Activated B cell treated with CpG ODN at 0.5 μM for 24 hours (primary cell): ENCODE measurements at regions of chr6 and their contacts with region 1.

Region 1: GRCh38 chr6:160791459-160791858 is 89.4 kb downstream of the PLG start:
- DNase-seq: no peak
- ATAC-seq: peak; percentile 74
- H3K4me3 Mint-ChIP-seq: no peak overlapping the region
- H3K27ac Mint-ChIP-seq: peak overlapping the region; percentile 73
- H3K4me1 Mint-ChIP-seq: peaks cover 17% of the 10 kb centered on the region
- H3K27me3 Mint-ChIP-seq: no peaks in the 10 kb centered on the region
- CTCF ChIP-seq: no peak

Region 2: DNA sequence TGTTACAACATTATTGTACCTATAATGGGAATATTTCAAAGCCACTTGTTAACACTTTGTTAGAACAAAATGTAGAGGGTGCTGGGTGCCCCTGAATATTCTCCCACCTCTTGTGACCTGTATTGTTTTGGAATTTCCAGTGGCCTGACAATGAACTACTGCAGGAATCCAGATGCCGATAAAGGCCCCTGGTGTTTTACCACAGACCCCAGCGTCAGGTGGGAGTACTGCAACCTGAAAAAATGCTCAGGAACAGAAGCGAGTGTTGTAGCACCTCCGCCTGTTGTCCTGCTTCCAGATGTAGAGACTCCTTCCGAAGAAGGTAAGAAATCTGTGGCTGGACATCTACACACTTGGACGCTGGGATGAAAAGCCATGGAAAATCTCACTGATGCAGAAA is 60.5 kb before region 1 on chr6:
- CTCF ChIA-PET with region 1: no interaction called
- POLR2A ChIA-PET with region 1: no interaction called
- intact Hi-C with region 1: no loop called
- DNase-seq: no peak
- ATAC-seq: no peak
- H3K4me3 Mint-ChIP-seq: no peak overlapping the region
- H3K27ac Mint-ChIP-seq: no peak overlapping the region
- H3K4me1 Mint-ChIP-seq: no peaks in the 10 kb centered on the region
- H3K27me3 Mint-ChIP-seq: peaks cover 23% of the 10 kb centered on the region
- CTCF ChIP-seq: no peak

Region 3: GRCh38 chr6:160742090-160742489 is 49.4 kb before region 1 on chr6:
- CTCF ChIA-PET with region 1: no interaction called
- POLR2A ChIA-PET with region 1: interaction called, 3 read pairs
- intact Hi-C with region 1: loop called (anchors 1 kb)
- DNase-seq: no peak
- ATAC-seq: peak; percentile 36
- H3K4me3 Mint-ChIP-seq: no peak overlapping the region
- H3K27ac Mint-ChIP-seq: no peak overlapping the region
- H3K4me1 Mint-ChIP-seq: peaks cover 35% of the 10 kb centered on the region
- H3K27me3 Mint-ChIP-seq: peaks cover 10% of the 10 kb centered on the region
- CTCF ChIP-seq: no peak

Region 4: GRCh38 chr6:160837146-160837545 is 45.7 kb after region 1 on chr6:
- CTCF ChIA-PET with region 1: no interaction called
- POLR2A ChIA-PET with region 1: no interaction called
- intact Hi-C with region 1: no loop called
- DNase-seq: no peak
- ATAC-seq: no peak
- H3K4me3 Mint-ChIP-seq: no peak overlapping the region
- H3K27ac Mint-ChIP-seq: no peak overlapping the region
- H3K4me1 Mint-ChIP-seq: no peaks in the 10 kb centered on the region
- H3K27me3 Mint-ChIP-seq: no peaks in the 10 kb centered on the region
- CTCF ChIP-seq: no peak

Region 5: DNA sequence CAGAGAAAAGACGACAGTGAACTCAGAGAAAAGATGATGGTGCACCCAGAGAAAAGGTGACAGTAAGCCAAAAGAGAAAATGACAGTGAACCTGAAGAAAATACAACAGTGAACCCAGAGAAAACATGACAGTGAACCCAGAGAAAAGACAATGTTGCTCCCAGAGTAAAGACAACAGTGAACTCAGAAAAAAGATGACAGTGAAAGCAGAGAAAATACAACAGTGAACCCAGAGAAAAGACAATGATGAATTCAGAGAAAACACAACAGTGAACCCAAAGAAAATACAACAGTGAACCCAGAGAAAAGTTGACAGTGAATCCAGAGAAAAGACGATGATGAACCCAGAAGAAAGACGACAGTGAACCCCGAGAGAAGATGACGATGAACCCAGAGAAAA is 59.6 kb after region 1 on chr6:
- CTCF ChIA-PET with region 1: no interaction called
- POLR2A ChIA-PET with region 1: no interaction called
- intact Hi-C with region 1: no loop called
- DNase-seq: no peak
- ATAC-seq: no peak
- H3K4me3 Mint-ChIP-seq: no peak overlapping the region
- H3K27ac Mint-ChIP-seq: no peak overlapping the region
- H3K4me1 Mint-ChIP-seq: no peaks in the 10 kb centered on the region
- H3K27me3 Mint-ChIP-seq: no peaks in the 10 kb centered on the region
- CTCF ChIP-seq: no peak

Region 6: GRCh38 chr6:161422710-161423670 is 631.5 kb after region 1 on chr6:
- CTCF ChIA-PET with region 1: no interaction called
- POLR2A ChIA-PET with region 1: no interaction called
- intact Hi-C with region 1: no loop called
- DNase-seq: no peak
- ATAC-seq: no peak
- H3K4me3 Mint-ChIP-seq: no peak overlapping the region
- H3K27ac Mint-ChIP-seq: no peak overlapping the region
- H3K4me1 Mint-ChIP-seq: no peaks in the 10 kb centered on the region
- H3K27me3 Mint-ChIP-seq: peaks cover 2% of the 10 kb centered on the region
- CTCF ChIP-seq: no peak